CD8-positive, alpha-beta T cell (primary cell): ENCODE measurements at regions of chr7 and their contacts with region 1.

Region 1: DNA sequence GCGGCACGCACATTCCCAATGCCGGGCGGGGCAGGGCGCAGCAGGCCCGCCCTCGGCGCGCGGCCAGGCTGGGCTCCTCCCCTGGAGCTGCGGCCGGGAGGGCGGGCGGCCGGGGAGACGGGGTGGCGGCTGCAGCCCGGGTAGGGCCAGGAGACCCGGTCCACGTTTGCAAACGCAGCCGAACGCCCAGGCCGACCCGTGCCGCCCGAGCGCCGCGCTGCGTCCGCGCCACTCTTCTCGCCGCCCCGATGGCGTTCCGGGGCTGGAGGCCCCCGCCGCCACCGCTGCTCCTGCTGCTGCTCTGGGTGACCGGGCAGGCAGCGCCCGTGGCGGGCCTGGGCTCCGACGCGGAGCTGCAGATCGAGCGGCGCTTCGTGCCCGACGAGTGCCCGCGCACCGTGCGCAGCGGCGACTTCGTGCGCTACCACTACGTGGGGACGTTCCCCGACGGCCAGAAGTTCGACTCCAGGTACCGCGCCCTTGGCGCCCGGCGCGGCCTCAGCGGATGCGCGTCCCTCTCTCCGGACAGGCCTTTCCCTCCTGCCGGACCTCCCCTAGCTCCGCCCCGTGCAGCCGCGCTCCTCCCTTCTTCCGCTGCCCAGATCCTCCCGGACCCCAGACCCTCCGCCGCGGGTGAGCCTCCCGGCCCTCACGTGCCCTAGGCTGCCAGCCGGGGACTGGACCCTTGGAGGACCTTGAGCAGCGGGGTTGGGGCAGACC is at the start of gene FKBP9:
- DNase-seq: peak in 2 of 9 experiments; percentile 10
- ATAC-seq: no peak
- H3K4me3 ChIP-seq: peak within 1 kb of the TSS; percentile 20 to 41
- H3K4me3 Mint-ChIP-seq: peak within 1 kb of the TSS; percentile 72
- H3K27ac ChIP-seq: no peak within 1 kb of the TSS
- H3K27ac Mint-ChIP-seq: no peak within 1 kb of the TSS
- H3K4me1 ChIP-seq: peaks cover 3% of the 10 kb centered on the region
- H3K4me1 Mint-ChIP-seq: peaks cover 3% of the 10 kb centered on the region
- H3K27me3 ChIP-seq: peaks cover 9 to 12% of the 10 kb centered on the region in 2 experiments
- H3K27me3 Mint-ChIP-seq: peaks cover 32% of the 10 kb centered on the region
- CTCF ChIP-seq: no peak
- total RNA-seq, gene FKBP9: not detected

Region 2: GRCh38 chr7:34260279-34260678 is 1302.8 kb after region 1 on chr7:
- CTCF ChIA-PET with region 1: no interaction called
- POLR2A ChIA-PET with region 1: no interaction called
- intact Hi-C with region 1: loop called in 1 of 2 experiments (anchors 10 kb)
- DNase-seq: no peak
- ATAC-seq: no peak
- H3K4me3 ChIP-seq: no peak overlapping the region
- H3K4me3 Mint-ChIP-seq: no peak overlapping the region
- H3K27ac ChIP-seq: no peak overlapping the region
- H3K27ac Mint-ChIP-seq: no peak overlapping the region
- H3K4me1 ChIP-seq: no peaks in the 10 kb centered on the region
- H3K4me1 Mint-ChIP-seq: no peaks in the 10 kb centered on the region
- H3K27me3 ChIP-seq: no peaks in the 10 kb centered on the region
- H3K27me3 Mint-ChIP-seq: no peaks in the 10 kb centered on the region
- CTCF ChIP-seq: no peak